ENCODE measurements at regions of chr10 and their contacts with region 1.

Region 1: DNA sequence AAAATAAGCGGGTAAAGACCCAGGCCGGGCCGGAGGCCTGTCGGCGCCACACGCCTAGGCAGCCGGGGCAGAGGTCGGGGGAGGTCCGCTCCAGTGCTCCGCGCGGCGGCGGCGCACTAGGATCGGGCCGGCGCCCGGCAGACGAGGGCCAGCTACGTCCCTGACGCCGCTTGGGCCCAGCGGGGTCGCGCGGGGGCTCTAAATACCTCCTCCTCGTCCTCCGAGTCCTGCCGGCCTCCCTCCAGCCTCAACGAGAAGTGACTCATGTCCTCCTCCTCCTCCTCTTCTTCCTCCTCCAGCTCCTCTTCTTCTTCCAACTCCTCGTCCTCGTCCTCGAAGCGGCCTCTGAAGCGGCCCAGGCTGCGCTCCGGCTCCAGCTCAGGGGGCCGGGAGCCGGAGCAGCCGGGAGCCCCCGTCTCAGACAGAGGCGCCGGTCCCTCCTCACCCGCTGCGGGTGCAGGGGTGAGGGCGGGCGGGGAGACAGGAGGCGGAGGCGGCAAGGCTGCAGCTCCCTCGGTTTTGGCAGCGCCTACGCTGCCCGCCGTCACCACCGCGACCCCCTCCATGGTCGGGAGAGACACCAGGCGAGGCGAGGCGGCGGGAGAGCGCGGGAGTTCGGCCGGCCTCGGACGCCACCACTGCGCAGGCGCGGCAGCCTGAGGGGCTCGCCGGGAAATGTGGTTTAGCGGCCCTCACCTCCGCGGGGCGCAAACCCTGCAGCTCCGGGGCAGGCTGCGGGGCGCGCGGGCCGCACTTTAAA is at the start of gene PCGF6:
- DNase-seq: peak; percentile 70 to 97 (median 82)

Region 2: GRCh38 chr10:103367782-103368518 is 17.3 kb after region 1 on chr10 and contains the start of gene TAF5:
- intact Hi-C with region 1: loop called (anchors 1 kb)
- DNase-seq: peak; percentile 85 to 98 (median 90)

Region 3: GRCh38 chr10:103833731-103834365 is 483.2 kb after region 1 on chr10:
- intact Hi-C with region 1: no loop called
- DNase-seq: peak in 1 of 10 donors; percentile 62

Region 4: GRCh38 chr10:104020020-104020419 is 669.3 kb after region 1 on chr10:
- intact Hi-C with region 1: no loop called
- DNase-seq: no peak